ENCODE measurements at regions of chr7 and their contacts with region 1.

Region 1: DNA sequence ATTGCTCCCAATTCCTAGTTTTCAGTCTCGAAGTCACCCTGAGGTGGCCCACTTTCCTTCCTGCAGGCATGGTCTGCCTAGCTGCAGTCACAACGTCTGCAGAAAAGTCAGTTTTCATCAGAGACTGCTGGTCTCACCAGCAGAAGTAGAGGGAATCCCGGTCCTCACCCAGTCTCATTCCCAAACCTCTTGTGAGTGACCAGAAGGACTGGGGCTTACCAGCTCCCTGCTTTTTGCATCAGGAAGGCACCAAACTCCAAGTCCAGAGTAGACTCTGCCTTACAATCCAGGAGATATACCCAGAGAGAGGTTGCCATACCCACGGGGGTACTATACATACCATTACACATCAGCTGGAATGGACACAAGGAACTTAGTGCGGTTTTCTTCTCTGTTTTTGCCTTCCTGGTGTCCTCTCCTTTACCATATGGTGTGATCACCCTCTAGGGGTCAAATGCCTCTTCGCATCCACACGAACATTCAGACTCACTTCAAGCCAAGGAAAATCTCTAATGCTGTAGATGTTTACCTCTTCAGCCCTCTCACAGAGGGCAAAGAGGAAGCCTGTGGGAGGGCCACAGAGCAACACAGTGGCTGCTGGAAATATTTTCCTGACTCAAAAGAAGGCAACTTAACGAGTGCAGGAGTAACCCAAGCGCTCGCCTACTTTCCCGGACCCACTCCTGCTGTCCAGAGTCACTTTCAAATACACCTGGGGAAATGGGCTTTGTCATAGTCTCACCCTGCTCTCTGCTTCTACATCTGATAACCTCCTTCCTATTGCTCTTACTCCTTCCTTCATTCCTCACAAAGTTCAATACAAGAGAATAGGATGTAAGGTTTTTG is 220.9 kb downstream of the C7orf25 start:
- DNase-seq: no peak
- ATAC-seq: peak; percentile 60

Region 2: GRCh38 chr7:42227936-42228591 is 463.0 kb before region 1 on chr7:
- intact Hi-C with region 1: loop called in 1 of 2 experiments (anchors 10 kb)
- DNase-seq: no peak
- ATAC-seq: no peak

Measured in left colon (tissue), 2 donors.